Left colon (tissue), 2 donors: ENCODE measurements at regions of chr1 and their contacts with region 1.

Region 1: GRCh38 chr1:30718636-30719405 is 4.6 kb downstream of the MATN1 start:
- DNase-seq: peak; percentile 79 to 99
- ATAC-seq: peak; percentile 78

Region 2: GRCh38 chr1:30779294-30780071 is 60.7 kb after region 1 on chr1:
- intact Hi-C with region 1: loop called (anchors 2 to 5 kb)
- DNase-seq: peak; percentile 64 to 91
- ATAC-seq: peak; percentile 83